Right ventricle myocardium superior (tissue), 1 donor: ENCODE measurements at regions of chr2 and their contacts with region 1.

Region 1: DNA sequence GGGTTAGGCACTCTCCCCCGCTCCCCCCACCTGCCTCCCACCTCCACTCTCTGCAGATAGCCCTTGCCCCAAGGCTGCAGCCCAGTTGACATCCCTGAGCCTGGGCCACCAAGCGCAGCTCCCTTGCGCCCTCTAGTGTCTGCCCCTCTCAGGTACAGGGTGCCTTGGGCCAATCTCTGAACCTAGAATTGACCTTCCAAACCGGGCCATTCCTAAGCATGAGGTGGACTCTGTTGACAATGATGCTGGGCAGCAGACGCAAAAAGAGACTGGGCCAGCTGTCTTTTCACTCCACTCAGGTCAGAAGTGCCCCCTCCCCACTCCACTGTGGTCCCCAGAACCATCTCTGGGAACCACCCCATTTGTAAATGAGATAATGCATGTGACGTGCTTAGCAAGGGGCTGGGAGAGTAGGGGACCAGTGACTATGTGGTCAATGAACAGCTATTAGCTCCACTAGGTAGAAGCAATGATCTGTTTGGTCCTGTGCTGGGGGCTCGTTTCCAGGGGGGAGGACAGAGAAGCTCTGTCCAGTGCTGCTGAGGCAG is 43.3 kb upstream of the PLB1 start:
- DNase-seq: peak; percentile 87
- ATAC-seq: peak; percentile 92

Region 2: GRCh38 chr2:27703638-27704341 is 748.8 kb before region 1 on chr2:
- intact Hi-C with region 1: loop called (anchors 5 kb)
- DNase-seq: peak; percentile 84
- ATAC-seq: peak; percentile 69

Region 3: GRCh38 chr2:27756544-27757498 is 695.8 kb before region 1 on chr2:
- intact Hi-C with region 1: loop called (anchors 5 kb)
- DNase-seq: no peak
- ATAC-seq: peak; percentile 76

Region 4: DNA sequence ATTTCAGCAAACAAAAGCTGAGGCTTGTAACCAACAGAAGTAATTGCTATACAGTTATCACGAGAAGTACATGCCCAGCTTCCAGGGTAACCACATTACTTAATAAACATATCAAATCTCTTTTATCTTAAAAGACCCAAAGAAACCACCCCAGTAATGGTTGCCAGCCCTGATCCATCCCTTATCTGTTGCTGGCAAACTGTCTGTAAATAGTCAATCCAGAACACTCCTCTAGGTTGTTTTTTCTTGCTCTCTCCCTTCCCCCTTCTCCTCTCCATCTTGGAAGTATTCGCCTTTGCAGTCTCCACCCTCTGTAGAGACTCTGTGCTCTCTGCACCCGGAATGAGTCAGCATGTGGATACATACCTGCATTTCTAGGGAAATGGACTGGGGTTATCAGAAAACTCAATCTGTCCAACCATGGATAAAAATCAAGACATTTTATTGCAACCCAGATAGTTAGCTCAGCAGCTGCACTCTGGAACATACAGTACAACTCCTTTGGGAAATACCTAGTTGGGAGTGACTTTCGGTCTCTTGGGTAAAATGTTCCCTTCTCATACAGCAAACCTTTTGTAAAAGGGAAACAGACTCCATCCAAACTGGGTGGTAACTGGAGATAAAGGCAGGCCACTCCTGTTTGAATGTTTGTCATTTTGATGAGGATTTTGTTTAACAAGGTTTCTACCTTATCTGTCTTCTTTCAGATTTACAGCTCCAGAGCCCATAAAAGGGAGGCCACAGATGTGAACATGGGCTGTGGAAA is 183.4 kb before region 1 on chr2:
- intact Hi-C with region 1: no loop called
- DNase-seq: no peak
- ATAC-seq: peak; percentile 68

Region 5: DNA sequence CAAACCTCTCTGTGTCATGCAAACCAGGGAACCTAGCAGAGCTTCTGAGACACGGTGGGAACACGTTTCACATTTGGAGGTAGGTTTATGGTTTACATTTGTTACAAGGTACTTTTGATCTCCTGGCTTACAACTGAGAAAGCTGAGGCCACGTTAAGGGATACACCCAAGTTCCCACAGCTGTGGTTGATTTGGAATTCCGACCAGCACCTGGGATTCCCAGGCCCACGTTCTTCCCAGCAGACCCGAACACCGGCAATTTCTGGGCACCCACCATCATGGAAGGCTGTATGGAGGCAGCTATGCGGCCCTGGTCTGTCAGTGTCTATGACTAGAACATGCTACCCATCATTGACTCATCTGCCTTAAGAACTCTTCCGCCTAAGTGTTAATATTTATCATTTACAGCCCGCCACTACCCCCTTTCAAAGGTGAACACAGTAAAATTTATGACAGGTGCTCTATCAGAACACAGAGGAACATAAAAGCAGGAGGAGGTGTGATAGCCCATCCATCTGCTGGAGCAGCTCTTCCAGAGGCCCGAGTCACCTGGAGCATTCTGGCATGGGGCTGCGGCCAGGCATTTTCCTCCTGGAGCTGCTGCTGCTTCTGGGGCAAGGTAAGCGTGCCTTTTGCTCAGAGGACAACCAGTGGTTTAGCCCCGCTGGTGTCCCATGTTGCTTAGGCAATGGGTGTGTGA is 43.1 kb after region 1 on chr2 and contains the start of gene PLB1:
- intact Hi-C with region 1: no loop called
- DNase-seq: no peak
- ATAC-seq: no peak
- total RNA-seq, gene PLB1: 1.8 TPM